Activated naive CD4-positive, alpha-beta T cell treated with anti-CD3 and anti-CD28 coated beads for 36 hours (primary cell): ENCODE measurements at regions of chr6 and their contacts with region 1.

Region 1: GRCh38 chr6:137497721-137498463 is 3.7 kb upstream of the OLIG3 start:
- DNase-seq: no peak
- H3K4me3 Mint-ChIP-seq: peak overlapping the region; percentile 68
- H3K27ac Mint-ChIP-seq: no peak overlapping the region
- H3K4me1 Mint-ChIP-seq: peaks cover 46% of the 10 kb centered on the region
- H3K27me3 Mint-ChIP-seq: peaks cover 63% of the 10 kb centered on the region

Region 2: GRCh38 chr6:137240168-137240567 is 257.7 kb before region 1 on chr6:
- CTCF ChIA-PET with region 1: no interaction called
- intact Hi-C with region 1: no loop called
- DNase-seq: no peak
- H3K4me3 Mint-ChIP-seq: no peak overlapping the region
- H3K27ac Mint-ChIP-seq: no peak overlapping the region
- H3K4me1 Mint-ChIP-seq: peaks cover 2% of the 10 kb centered on the region
- H3K27me3 Mint-ChIP-seq: no peaks in the 10 kb centered on the region

Region 3: DNA sequence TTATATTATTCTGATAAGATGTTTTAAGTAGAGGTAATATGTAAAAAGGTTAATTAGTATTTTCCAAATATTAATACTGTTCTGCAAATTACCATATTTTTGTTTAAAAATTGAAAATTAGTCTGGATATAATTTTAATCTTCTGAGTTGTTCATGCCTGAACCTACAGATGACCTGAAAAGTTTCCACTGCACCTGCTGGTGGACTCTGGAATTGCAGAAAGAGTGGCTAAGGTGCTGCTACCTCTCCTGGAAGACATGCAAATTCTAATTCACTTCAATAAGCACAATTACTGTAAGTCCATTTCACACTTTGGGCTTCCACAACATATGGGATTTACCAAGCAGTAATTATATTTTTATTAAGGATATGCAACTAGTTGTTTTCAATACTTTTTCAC is 74.0 kb after region 1 on chr6:
- CTCF ChIA-PET with region 1: no interaction called
- intact Hi-C with region 1: loop called (anchors 5 kb)
- DNase-seq: peak; percentile 85
- H3K4me3 Mint-ChIP-seq: no peak overlapping the region
- H3K27ac Mint-ChIP-seq: no peak overlapping the region
- H3K4me1 Mint-ChIP-seq: peaks cover 5% of the 10 kb centered on the region
- H3K27me3 Mint-ChIP-seq: no peaks in the 10 kb centered on the region